Mammary epithelial cell (primary cell): ENCODE measurements at regions of chr7 and their contacts with region 1.

Region 1: GRCh38 chr7:122528879-122529481 is 169.9 kb downstream of the RNF133 start:
- DNase-seq: peak; percentile 13
- H3K4me3 ChIP-seq: no peak overlapping the region
- H3K27ac ChIP-seq: no peak overlapping the region
- H3K4me1 ChIP-seq: no peaks in the 10 kb centered on the region
- H3K27me3 ChIP-seq: no peaks in the 10 kb centered on the region
- CTCF ChIP-seq: peak; percentile 40 to 55

Region 2: GRCh38 chr7:122014697-122015096 is 514.3 kb before region 1 on chr7:
- CTCF ChIA-PET with region 1: no interaction called
- dilution Hi-C with region 1: no loop called
- in situ Hi-C with region 1: no loop called
- intact Hi-C with region 1: loop called (anchors 5 kb)
- DNase-seq: no peak
- H3K4me3 ChIP-seq: no peak overlapping the region
- H3K27ac ChIP-seq: no peak overlapping the region
- H3K4me1 ChIP-seq: no peaks in the 10 kb centered on the region
- H3K27me3 ChIP-seq: no peaks in the 10 kb centered on the region
- CTCF ChIP-seq: no peak

Region 3: GRCh38 chr7:122092964-122093797 is 435.8 kb before region 1 on chr7:
- CTCF ChIA-PET with region 1: no interaction called
- dilution Hi-C with region 1: no loop called
- in situ Hi-C with region 1: loop called (anchors 10 kb)
- intact Hi-C with region 1: loop called (anchors 1 kb)
- DNase-seq: peak; percentile 72
- H3K4me3 ChIP-seq: no peak overlapping the region
- H3K27ac ChIP-seq: no peak overlapping the region
- H3K4me1 ChIP-seq: peaks cover 7% of the 10 kb centered on the region
- H3K27me3 ChIP-seq: no peaks in the 10 kb centered on the region
- CTCF ChIP-seq: peak; percentile 87 to 98

Region 4: GRCh38 chr7:122219253-122219865 is 309.6 kb before region 1 on chr7:
- CTCF ChIA-PET with region 1: no interaction called
- dilution Hi-C with region 1: no loop called
- in situ Hi-C with region 1: loop called (anchors 10 kb)
- intact Hi-C with region 1: loop called (anchors 1 kb)
- DNase-seq: peak; percentile 3
- H3K4me3 ChIP-seq: no peak overlapping the region
- H3K27ac ChIP-seq: no peak overlapping the region
- H3K4me1 ChIP-seq: no peaks in the 10 kb centered on the region
- H3K27me3 ChIP-seq: no peaks in the 10 kb centered on the region
- CTCF ChIP-seq: peak; percentile 67 to 74

Region 5: GRCh38 chr7:122225874-122226273 is 303.1 kb before region 1 on chr7:
- CTCF ChIA-PET with region 1: no interaction called
- dilution Hi-C with region 1: no loop called
- in situ Hi-C with region 1: loop called in 1 of 2 experiments (anchors 10 kb)
- intact Hi-C with region 1: no loop called
- DNase-seq: peak; percentile 27
- H3K4me3 ChIP-seq: no peak overlapping the region
- H3K27ac ChIP-seq: no peak overlapping the region
- H3K4me1 ChIP-seq: no peaks in the 10 kb centered on the region
- H3K27me3 ChIP-seq: no peaks in the 10 kb centered on the region
- CTCF ChIP-seq: no peak

Region 6: DNA sequence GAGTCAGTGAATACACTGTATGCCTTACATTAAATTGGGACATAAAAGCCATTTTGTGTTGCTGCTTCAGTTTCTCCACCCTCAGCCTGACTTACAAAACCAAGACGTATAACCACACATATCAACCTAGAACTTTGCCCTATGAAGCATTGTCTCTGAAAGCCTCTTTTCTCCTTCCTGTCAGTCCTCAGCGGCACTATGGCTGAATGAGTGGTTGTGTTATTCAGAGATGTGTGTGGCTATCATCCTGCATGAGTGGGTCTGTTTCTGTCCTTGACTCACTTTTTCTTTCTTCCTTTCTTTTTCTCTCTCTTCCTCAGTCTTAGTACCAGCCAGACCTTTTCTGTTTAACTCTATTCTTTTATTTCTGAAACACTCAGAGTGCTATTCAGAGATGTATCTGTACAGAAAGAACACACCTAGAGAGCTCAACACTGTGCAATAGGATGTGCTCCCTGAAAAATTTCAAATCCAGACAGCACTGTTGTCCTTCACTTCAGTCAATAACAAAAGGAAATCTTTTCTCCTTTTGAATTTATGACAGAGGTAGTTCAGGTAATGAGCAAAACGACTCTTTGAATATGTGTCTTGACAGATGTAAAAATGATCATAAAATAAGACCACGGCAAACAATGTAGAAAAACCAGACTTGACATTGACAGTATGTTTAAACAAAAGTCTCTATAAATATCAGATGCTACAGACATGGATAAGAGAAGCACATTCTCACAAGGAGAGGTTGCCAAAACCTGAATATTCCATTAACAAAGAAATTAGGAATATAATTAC is 61.1 kb before region 1 on chr7:
- CTCF ChIA-PET with region 1: no interaction called
- dilution Hi-C with region 1: no loop called
- in situ Hi-C with region 1: no loop called
- intact Hi-C with region 1: no loop called
- DNase-seq: no peak
- H3K4me3 ChIP-seq: no peak overlapping the region
- H3K27ac ChIP-seq: no peak overlapping the region
- H3K4me1 ChIP-seq: no peaks in the 10 kb centered on the region
- H3K27me3 ChIP-seq: no peaks in the 10 kb centered on the region
- CTCF ChIP-seq: no peak